Left ventricle myocardium inferior (tissue), 1 donor: ENCODE measurements at regions of chr7 and their contacts with region 1.

Region 1: DNA sequence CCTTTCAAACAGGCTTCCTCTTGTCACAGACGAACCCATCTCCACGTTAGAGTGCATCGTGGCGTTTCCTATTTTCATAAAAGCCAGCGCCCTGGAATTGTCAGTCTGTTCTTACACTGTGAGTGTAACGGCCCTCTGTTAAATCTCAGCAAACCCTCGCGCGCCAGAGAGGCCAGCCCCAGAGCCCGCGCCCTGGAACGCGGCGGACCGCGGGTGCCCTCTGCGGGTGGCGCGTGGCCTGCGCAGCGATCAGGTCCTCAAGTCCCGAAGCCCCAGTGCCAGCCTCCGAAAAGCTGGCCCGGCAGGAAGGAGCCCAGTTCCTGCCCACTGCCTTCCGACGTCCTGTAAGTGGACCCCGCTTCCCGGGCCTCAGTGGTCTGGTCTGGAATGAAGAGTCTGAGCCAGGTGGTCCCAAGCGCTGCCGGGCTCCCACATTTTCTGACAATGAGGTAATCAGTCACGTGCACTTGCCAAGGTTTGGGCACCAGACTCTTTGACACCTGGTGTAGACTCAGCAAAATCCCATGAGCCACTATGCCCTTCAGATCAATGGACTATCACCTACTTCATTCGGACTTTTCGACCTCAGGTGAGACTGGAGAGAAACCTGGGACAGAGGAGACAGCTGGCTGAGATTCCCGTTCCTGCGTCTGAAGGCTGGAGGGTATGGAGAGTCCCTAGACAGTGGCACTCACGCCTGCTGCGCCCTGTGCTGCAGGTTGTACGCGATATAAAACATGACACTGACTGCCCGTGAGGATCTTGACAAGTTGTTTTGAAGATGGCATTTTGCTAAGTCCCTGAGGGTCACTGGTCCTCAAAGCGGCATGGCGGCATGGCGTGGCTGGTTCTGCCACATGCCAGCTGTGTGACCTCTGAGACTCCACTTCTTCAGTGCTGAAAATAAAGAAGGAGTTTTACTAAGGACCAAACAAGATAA is 109.4 kb upstream of the LANCL2 start:
- DNase-seq: peak; percentile 81
- H3K4me3 ChIP-seq: peak overlapping the region; percentile 84
- H3K27ac ChIP-seq: peak overlapping the region; percentile 63
- H3K4me1 ChIP-seq: peaks cover 13% of the 10 kb centered on the region
- H3K27me3 ChIP-seq: peaks cover 81% of the 10 kb centered on the region
- CTCF ChIP-seq: peak; percentile 92

Region 2: GRCh38 chr7:54773472-54774399 is 482.0 kb before region 1 on chr7:
- intact Hi-C with region 1: loop called (anchors 5 kb)
- DNase-seq: peak; percentile 78
- H3K4me3 ChIP-seq: peak overlapping the region; percentile 53
- H3K27ac ChIP-seq: no peak overlapping the region
- H3K4me1 ChIP-seq: no peaks in the 10 kb centered on the region
- H3K27me3 ChIP-seq: peaks cover 18% of the 10 kb centered on the region
- CTCF ChIP-seq: peak; percentile 90

Region 3: GRCh38 chr7:54839538-54840213 is 416.1 kb before region 1 on chr7:
- intact Hi-C with region 1: loop called (anchors 10 kb)
- DNase-seq: peak; percentile 82
- H3K4me3 ChIP-seq: no peak overlapping the region
- H3K27ac ChIP-seq: peak overlapping the region; percentile 36
- H3K4me1 ChIP-seq: peaks cover 33% of the 10 kb centered on the region
- H3K27me3 ChIP-seq: no peaks in the 10 kb centered on the region
- CTCF ChIP-seq: peak; percentile 80

Region 4: GRCh38 chr7:55004579-55004978 is 251.2 kb before region 1 on chr7:
- intact Hi-C with region 1: no loop called
- DNase-seq: no peak
- H3K4me3 ChIP-seq: no peak overlapping the region
- H3K27ac ChIP-seq: no peak overlapping the region
- H3K4me1 ChIP-seq: no peaks in the 10 kb centered on the region
- H3K27me3 ChIP-seq: peaks cover 70% of the 10 kb centered on the region
- CTCF ChIP-seq: no peak

Region 5: DNA sequence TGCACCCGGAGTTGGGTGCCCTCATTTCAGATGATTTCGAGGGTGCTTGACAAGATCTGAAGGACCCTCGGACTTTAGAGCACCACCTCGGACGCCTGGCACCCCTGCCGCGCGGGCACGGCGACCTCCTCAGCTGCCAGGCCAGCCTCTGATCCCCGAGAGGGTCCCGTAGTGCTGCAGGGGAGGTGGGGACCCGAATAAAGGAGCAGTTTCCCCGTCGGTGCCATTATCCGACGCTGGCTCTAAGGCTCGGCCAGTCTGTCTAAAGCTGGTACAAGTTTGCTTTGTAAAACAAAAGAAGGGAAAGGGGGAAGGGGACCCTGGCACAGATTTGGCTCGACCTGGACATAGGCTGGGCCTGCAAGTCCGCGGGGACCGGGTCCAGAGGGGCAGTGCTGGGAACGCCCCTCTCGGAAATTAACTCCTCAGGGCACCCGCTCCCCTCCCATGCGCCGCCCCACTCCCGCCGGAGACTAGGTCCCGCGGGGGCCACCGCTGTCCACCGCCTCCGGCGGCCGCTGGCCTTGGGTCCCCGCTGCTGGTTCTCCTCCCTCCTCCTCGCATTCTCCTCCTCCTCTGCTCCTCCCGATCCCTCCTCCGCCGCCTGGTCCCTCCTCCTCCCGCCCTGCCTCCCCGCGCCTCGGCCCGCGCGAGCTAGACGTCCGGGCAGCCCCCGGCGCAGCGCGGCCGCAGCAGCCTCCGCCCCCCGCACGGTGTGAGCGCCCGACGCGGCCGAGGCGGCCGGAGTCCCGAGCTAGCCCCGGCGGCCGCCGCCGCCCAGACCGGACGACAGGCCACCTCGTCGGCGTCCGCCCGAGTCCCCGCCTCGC is 237.2 kb before region 1 on chr7 and contains the start of gene EGFR:
- intact Hi-C with region 1: loop called (anchors 10 kb)
- DNase-seq: peak; percentile 85
- H3K4me3 ChIP-seq: peak within 1 kb of the TSS; percentile 85
- H3K27ac ChIP-seq: peak within 1 kb of the TSS; percentile 96
- H3K4me1 ChIP-seq: peaks cover 28% of the 10 kb centered on the region
- H3K27me3 ChIP-seq: peaks cover 58% of the 10 kb centered on the region
- CTCF ChIP-seq: no peak
- total RNA-seq, gene EGFR: 6.1 TPM

Region 6: GRCh38 chr7:55309040-55309991 is 53.5 kb after region 1 on chr7:
- intact Hi-C with region 1: no loop called
- DNase-seq: no peak
- H3K4me3 ChIP-seq: no peak overlapping the region
- H3K27ac ChIP-seq: peak overlapping the region; percentile 55
- H3K4me1 ChIP-seq: peaks cover 32% of the 10 kb centered on the region
- H3K27me3 ChIP-seq: no peaks in the 10 kb centered on the region
- CTCF ChIP-seq: no peak

Region 7: DNA sequence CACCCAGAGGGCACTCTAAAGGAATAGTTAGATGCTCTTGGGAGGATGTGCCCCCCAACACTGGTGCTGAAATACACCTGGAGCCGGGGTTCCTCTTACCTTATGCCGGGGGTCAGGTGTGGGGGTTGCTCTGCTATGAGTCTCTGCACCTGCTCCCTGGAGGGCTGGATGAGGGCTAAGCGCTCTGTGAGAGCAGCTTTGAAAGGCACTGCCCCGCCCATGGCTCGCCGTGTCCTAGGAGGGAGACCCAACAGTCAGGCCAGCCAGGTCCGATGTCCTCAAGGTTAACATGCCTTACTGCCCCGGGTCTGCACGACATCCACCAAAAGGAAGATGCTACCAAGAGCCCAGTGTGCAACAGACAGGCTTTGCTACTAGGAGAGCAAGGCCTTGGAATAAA is 763.7 kb after region 1 on chr7:
- intact Hi-C with region 1: no loop called
- DNase-seq: no peak
- H3K4me3 ChIP-seq: no peak overlapping the region
- H3K27ac ChIP-seq: no peak overlapping the region
- H3K4me1 ChIP-seq: peaks cover 6% of the 10 kb centered on the region
- H3K27me3 ChIP-seq: no peaks in the 10 kb centered on the region
- CTCF ChIP-seq: no peak